Naive thymus-derived CD4-positive, alpha-beta T cell (primary cell): ENCODE measurements at regions of chr11 and their contacts with region 1.

Region 1: DNA sequence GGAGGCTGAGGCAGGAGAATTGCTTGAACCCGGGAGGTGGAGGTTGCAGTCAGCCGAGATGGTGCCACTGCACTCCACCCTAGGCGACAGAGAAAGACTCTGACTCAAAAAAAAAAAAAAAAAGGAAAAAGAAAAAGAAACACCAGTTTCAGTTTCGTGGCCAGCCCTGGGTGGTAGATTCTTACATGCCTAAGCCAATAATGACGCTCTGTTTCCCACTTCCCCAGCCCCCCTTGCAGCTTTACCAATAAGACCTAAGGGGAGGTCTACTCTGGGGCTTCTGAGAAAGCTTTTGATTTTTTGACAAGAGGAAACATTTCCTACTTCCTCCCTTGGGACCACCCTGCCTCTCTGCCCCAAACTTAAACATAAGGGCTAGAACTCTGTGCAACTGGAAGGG is 30.0 kb upstream of the PTPRJ start:
- DNase-seq: peak; percentile 14 to 82 (median 78)
- ATAC-seq: peak; percentile 92
- H3K4me3 ChIP-seq: no peak overlapping the region
- H3K4me3 Mint-ChIP-seq: peak overlapping the region; percentile 51 to 80 (median 70)
- H3K27ac ChIP-seq: peak overlapping the region; percentile 73
- H3K27ac Mint-ChIP-seq: peak overlapping the region; percentile 83 to 98 (median 96)
- H3K4me1 ChIP-seq: peaks cover 4 to 26% of the 10 kb centered on the region in 2 donors
- H3K4me1 Mint-ChIP-seq: peaks cover 25 to 60% (median 48%) of the 10 kb centered on the region in 7 donors
- H3K27me3 ChIP-seq: no peaks in the 10 kb centered on the region
- H3K27me3 Mint-ChIP-seq: no peaks in the 10 kb centered on the region

Region 2: GRCh38 chr11:47886096-47886495 is 64.3 kb before region 1 on chr11:
- CTCF ChIA-PET with region 1: no interaction called
- POLR2A ChIA-PET with region 1: no interaction called
- intact Hi-C with region 1: loop called in 1 of 2 experiments (anchors 2 kb)
- DNase-seq: peak in 5 of 9 donors; percentile 30 to 58 (median 45)
- ATAC-seq: peak; percentile 27
- H3K4me3 ChIP-seq: no peak overlapping the region
- H3K4me3 Mint-ChIP-seq: peak overlapping the region; percentile 43 to 85 (median 73)
- H3K27ac ChIP-seq: peak overlapping the region; percentile 52
- H3K27ac Mint-ChIP-seq: peak overlapping the region; percentile 86 to 95 (median 90)
- H3K4me1 ChIP-seq: peaks cover 6 to 56% of the 10 kb centered on the region in 2 donors
- H3K4me1 Mint-ChIP-seq: peaks cover 16 to 65% (median 58%) of the 10 kb centered on the region in 7 donors
- H3K27me3 ChIP-seq: no peaks in the 10 kb centered on the region
- H3K27me3 Mint-ChIP-seq: peaks cover 0 to 3% (median 0%) of the 10 kb centered on the region in 5 donors

Region 3: GRCh38 chr11:47899801-47900200 is 50.6 kb before region 1 on chr11:
- CTCF ChIA-PET with region 1: no interaction called
- POLR2A ChIA-PET with region 1: no interaction called
- intact Hi-C with region 1: no loop called
- DNase-seq: no peak
- ATAC-seq: peak; percentile 66
- H3K4me3 ChIP-seq: no peak overlapping the region
- H3K4me3 Mint-ChIP-seq: no peak overlapping the region
- H3K27ac ChIP-seq: no peak overlapping the region
- H3K27ac Mint-ChIP-seq: no peak overlapping the region
- H3K4me1 ChIP-seq: peaks cover 7 to 9% of the 10 kb centered on the region in 2 donors
- H3K4me1 Mint-ChIP-seq: peaks cover 0 to 16% (median 11%) of the 10 kb centered on the region in 7 donors
- H3K27me3 ChIP-seq: no peaks in the 10 kb centered on the region
- H3K27me3 Mint-ChIP-seq: peaks cover 0 to 11% (median 0%) of the 10 kb centered on the region in 5 donors

Region 4: DNA sequence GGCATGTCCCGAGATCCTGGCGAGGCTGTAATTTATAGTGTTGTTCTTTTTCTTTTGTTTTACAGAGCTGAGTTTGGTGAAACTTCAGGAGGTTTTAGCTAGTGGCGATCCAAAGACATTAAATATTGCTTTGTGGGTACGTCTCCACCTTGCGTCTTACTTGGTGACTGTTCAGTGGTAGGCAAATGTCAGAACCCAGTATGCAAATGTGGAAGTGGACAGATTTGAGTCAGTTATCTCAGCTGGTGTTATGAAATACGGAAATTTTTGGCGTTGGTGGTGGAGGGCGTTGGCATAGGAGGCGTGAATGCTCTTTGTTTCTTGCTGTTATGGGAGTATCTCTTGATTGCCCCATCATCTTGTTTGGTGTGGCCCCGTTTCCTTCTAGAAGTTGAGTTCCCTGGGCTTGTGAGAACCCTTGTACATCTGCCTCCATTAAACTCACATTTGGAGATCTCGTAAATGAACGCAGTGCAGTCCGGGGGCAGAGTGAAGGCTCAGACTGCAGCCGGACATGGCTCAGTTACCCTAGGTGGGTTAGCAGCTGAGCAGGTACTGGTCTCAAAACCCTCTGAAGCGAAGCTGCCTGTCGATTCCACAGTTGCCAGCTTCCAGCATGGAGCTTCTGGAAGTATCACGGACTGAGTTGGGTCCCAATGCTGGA is 69.8 kb after region 1 on chr11:
- CTCF ChIA-PET with region 1: no interaction called
- POLR2A ChIA-PET with region 1: no interaction called
- intact Hi-C with region 1: loop called in 1 of 2 experiments (anchors 1 kb)
- DNase-seq: no peak
- ATAC-seq: peak; percentile 80
- H3K4me3 ChIP-seq: no peak overlapping the region
- H3K4me3 Mint-ChIP-seq: peak overlapping the region in 6 of 10 donors; percentile 2 to 43 (median 7)
- H3K27ac ChIP-seq: no peak overlapping the region
- H3K27ac Mint-ChIP-seq: peak overlapping the region; percentile 2 to 78 (median 67)
- H3K4me1 ChIP-seq: peaks cover 43 to 56% of the 10 kb centered on the region in 2 donors
- H3K4me1 Mint-ChIP-seq: peaks cover 45 to 83% (median 70%) of the 10 kb centered on the region in 7 donors
- H3K27me3 ChIP-seq: no peaks in the 10 kb centered on the region
- H3K27me3 Mint-ChIP-seq: no peaks in the 10 kb centered on the region